ENCODE measurements at regions of chr7 and their contacts with region 1.

Region 1: GRCh38 chr7:80707318-80707717 is 68.9 kb downstream of the CD36 start:
- DNase-seq: no peak
- H3K4me3 ChIP-seq: no peak overlapping the region
- H3K27ac ChIP-seq: no peak overlapping the region
- H3K4me1 ChIP-seq: no peaks in the 10 kb centered on the region
- H3K27me3 ChIP-seq: no peaks in the 10 kb centered on the region
- CTCF ChIP-seq: no peak
- POLR2A ChIP-seq: no peak

Region 2: DNA sequence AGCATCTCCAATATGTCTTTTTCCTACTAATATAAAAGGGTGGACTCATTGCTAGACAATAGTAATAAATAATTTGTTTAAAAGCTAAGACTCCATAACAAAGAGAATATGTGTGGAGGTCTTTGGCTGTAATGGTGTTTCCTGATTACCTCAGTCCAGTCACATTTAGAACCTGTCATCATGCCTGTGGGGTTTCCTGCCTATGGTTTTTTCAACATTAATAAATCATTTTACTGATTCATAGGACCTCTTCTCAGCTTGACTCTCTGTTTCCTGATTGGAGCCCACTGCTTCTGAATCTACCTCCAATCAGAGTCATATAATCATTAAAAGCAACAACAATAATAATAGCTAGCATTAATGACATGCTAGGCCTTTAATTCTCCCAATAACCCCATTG is 625.1 kb before region 1 on chr7:
- intact Hi-C with region 1: loop called (anchors 5 kb)
- DNase-seq: no peak
- H3K4me3 ChIP-seq: no peak overlapping the region
- H3K27ac ChIP-seq: no peak overlapping the region
- H3K4me1 ChIP-seq: no peaks in the 10 kb centered on the region
- H3K27me3 ChIP-seq: no peaks in the 10 kb centered on the region
- CTCF ChIP-seq: no peak
- POLR2A ChIP-seq: no peak

Region 3: DNA sequence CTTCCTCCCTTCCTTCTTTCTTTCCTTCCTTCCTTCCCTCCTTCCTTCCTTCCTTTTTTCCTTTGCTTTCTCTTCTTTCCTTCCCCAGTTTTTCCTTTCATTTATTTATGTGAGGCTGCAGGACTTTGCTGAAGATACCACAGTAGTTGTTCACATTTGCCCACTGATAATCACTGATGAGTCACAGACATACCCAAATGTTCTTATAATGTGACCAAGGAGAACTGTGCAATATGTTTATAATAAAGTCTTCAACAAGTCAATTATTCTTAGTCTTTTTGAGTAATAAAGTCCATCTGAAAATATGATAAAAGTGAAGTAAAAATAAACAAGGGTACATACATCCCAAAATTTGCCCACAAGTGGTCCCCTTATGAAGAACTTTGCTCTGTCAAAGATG is 413.0 kb before region 1 on chr7:
- intact Hi-C with region 1: no loop called
- DNase-seq: no peak
- H3K4me3 ChIP-seq: no peak overlapping the region
- H3K27ac ChIP-seq: no peak overlapping the region
- H3K4me1 ChIP-seq: no peaks in the 10 kb centered on the region
- H3K27me3 ChIP-seq: no peaks in the 10 kb centered on the region
- CTCF ChIP-seq: no peak
- POLR2A ChIP-seq: no peak

Region 4: DNA sequence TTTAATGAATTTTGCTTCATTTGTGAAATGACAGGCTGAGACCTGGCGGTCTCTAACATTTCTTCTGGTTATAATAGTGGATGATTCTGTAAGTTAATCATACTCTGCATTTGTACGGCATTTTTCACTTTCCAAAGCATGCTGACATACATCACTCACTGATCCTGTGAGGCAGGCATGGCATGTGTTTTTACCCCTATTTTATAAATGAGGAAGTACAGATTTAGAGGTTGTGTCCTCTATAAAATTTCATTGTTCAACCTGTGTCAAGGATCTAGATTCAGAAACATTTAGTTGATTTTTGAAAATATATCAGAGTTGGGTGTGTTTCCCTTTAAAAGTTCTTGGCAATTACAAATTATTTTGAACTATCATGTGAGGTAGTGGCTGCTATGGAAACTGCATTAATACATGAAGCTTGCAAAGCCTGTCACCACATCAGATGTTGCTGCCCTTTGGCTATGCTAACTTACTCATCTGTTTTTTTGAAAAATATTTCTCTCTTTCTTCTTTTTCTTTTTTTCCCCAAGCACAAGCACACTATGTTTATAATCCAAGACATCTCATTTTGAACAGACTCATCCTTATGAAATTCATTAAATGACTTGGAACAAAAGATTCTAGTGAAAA is 400.0 kb before region 1 on chr7:
- intact Hi-C with region 1: no loop called
- DNase-seq: no peak
- H3K4me3 ChIP-seq: no peak overlapping the region
- H3K27ac ChIP-seq: no peak overlapping the region
- H3K4me1 ChIP-seq: no peaks in the 10 kb centered on the region
- H3K27me3 ChIP-seq: no peaks in the 10 kb centered on the region
- CTCF ChIP-seq: no peak
- POLR2A ChIP-seq: no peak

Region 5: DNA sequence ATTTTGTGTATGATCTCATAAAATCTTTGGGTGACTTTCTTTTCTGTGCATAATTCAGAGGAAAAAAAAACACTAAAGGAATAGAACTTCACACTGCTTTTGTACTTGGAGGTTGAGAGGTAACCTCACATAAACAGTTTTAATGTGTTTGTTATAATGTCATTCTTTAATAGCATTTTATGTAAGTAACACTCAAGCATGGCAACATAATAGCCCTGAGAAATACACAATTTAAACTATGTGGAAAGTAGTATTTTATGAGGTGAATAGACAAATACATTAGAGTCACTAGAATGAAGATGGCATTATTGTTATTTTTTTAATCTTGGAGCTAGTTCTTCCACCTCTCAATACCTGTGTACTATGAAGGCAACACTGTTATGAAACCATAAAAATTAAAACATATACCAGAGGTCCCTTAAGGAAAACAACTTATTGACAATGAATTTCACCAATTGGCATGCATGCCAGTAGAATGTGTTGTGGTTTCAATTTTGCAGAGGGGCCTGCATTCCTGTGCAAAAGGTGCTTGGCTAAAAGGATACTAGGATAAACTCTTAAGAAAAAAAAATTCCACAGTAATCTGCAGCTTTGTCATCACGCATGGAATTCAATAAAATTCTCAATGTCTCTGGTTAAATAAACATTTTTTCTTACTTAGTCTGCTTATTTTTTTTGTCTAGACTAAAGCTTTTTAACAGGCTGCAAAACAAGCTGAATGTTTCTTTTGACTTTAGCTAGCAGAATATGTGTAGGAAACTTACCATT is 33.6 kb after region 1 on chr7:
- intact Hi-C with region 1: no loop called
- DNase-seq: no peak
- H3K4me3 ChIP-seq: no peak overlapping the region
- H3K27ac ChIP-seq: no peak overlapping the region
- H3K4me1 ChIP-seq: no peaks in the 10 kb centered on the region
- H3K27me3 ChIP-seq: no peaks in the 10 kb centered on the region
- CTCF ChIP-seq: no peak
- POLR2A ChIP-seq: no peak